GM10248 (cell line): ENCODE measurements at regions of chr5 and their contacts with region 1.

Region 1: DNA sequence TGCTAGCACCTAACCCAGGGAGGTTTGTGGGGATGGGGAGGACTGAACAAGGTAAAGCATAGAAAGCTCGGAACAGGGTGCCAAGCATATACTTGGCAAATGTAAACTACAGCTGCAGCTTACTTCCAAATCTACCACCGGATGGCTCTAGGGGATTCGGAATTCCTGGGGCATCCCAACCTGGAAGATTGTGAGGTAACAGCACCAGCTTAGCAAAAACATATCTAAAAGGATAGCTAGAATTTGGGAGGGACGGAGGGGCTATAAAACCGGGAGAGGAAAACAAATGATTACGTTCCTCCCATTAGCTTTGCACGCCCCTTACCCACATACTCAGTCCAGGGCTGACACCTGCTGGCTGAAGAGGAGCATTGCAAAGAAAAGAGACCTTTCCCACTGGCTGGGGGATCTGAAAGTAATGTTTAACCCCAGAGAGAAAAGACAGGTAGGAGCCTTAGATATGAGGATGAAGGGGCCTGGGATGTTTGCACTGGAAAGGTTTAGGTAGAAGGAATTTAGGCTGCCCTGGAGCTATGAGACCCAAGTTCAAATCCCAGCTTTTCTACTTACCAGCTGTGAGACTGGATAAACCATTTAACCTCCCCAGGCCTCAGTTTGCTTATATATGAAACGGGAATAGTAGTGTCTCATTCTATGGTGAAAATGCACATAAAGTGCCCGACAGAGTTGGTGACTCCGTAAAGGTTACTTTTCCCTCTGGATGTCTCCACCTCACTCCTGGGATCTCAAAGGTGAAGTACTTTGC is 73.6 kb downstream of the FAM114A2 start:
- DNase-seq: peak; percentile 80
- CTCF ChIP-seq: peak; percentile 95

Region 2: DNA sequence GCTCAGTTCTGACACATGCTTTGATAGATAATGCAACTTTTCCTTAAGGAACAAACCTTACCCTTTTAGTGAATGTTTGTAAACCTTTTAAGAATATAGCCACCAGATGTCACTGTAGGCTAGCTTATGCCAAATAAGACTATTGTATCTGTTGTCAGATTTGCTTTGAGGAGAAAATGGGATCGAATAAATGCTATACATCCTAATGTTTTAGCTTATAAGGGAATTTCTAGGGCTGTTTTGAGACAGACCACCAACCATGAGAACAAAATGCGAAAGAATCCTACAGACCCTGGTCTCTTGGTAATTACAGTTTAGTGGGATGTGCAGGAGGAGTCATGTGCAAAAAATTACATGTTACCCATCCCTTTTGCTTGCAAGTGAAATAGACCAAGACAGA is 1432.3 kb before region 1 on chr5:
- CTCF ChIA-PET with region 1: interaction called, 111 read pairs
- POLR2A ChIA-PET with region 1: no interaction called
- DNase-seq: peak; percentile 18
- CTCF ChIP-seq: peak; percentile 40

Region 3: DNA sequence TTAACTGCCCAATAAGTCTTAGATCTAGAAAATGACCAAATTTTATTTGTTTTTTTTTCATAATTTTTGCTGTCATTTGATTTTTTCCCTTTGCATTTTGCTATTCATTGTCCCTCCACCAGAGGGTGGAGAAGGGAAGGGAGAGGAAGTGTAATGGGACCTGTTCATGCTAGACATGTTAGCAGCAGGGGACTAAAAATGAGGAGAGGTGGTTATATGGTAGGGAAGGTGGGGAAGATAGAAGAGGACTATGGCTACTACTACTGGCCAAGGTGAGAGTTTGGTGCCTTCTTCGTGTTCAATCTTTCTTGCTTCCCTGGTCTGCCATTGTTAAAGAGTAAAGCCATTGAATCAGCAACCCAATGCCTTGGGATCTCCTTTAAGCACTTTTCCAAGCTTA is 468.2 kb before region 1 on chr5:
- CTCF ChIA-PET with region 1: interaction called, 66 read pairs
- POLR2A ChIA-PET with region 1: no interaction called
- DNase-seq: no peak
- CTCF ChIP-seq: peak; percentile 51

Region 4: GRCh38 chr5:153952893-153953292 is 12.2 kb before region 1 on chr5:
- CTCF ChIA-PET with region 1: interaction called, 29 read pairs
- POLR2A ChIA-PET with region 1: no interaction called
- DNase-seq: no peak
- CTCF ChIP-seq: no peak

Region 5: GRCh38 chr5:153987306-153987705 is 22.2 kb after region 1 on chr5:
- CTCF ChIA-PET with region 1: interaction called, 11 read pairs
- POLR2A ChIA-PET with region 1: no interaction called
- DNase-seq: no peak
- CTCF ChIP-seq: no peak